ENCODE measurements at regions of chr1 and their contacts with region 1.

Region 1: DNA sequence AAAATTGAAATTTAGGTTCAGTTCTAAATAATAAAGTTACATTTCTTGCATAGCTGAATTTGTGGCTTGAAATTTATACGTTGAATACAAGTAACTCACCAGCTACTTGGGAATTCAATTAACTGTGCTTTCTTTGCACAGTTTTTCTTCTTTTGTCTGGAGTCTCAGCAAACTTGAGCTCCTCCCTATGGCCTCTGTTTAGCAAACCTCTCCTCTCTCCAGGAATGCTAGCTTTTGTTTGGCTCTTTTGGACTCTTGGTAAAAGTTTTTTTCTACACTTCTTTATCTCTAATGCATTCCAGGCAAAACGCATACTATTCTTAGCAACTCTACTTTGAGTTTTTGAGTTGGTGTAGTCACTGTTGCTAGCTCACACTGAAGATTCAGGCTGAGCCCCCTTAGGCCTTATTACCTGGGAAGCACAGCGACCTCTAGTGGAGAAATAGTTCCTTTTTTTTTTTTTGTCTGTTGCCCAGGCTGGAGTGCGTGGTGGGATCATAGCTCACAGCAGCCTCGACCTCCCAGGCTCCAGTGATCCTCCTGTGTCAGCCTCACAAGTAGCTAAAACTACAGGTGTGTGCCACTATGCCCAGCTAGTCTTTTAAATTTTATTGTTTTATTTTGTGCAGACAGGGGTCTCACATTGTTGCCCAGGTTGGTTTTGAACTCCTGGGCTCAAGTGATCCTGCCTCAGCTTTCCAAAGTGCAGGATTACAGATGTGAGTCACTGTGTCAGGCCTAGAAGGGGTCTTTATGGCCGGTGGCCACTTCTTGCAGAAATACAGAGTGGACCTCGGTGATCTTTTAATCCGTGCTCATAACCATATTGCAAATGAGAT is 61.7 kb downstream of the CASQ2 start:
- H3K4me3 ChIP-seq: no peak overlapping the region
- H3K27ac ChIP-seq: no peak overlapping the region
- H3K4me1 ChIP-seq: no peaks in the 10 kb centered on the region
- CTCF ChIP-seq: peak; percentile 48

Region 2: GRCh38 chr1:115609021-115609420 is 97.8 kb before region 1 on chr1:
- CTCF ChIA-PET with region 1: interaction called, 40 read pairs
- POLR2A ChIA-PET with region 1: no interaction called
- H3K4me3 ChIP-seq: no peak overlapping the region
- H3K27ac ChIP-seq: no peak overlapping the region
- H3K4me1 ChIP-seq: no peaks in the 10 kb centered on the region
- CTCF ChIP-seq: no peak

Region 3: GRCh38 chr1:115685029-115685705 is 21.6 kb before region 1 on chr1:
- CTCF ChIA-PET with region 1: interaction called, 13 read pairs
- POLR2A ChIA-PET with region 1: no interaction called
- H3K4me3 ChIP-seq: no peak overlapping the region
- H3K27ac ChIP-seq: no peak overlapping the region
- H3K4me1 ChIP-seq: no peaks in the 10 kb centered on the region
- CTCF ChIP-seq: no peak

Region 4: GRCh38 chr1:115717541-115717940 is 10.7 kb after region 1 on chr1:
- CTCF ChIA-PET with region 1: interaction called, 26 read pairs
- POLR2A ChIA-PET with region 1: no interaction called
- H3K4me3 ChIP-seq: no peak overlapping the region
- H3K27ac ChIP-seq: no peak overlapping the region
- H3K4me1 ChIP-seq: no peaks in the 10 kb centered on the region
- CTCF ChIP-seq: no peak; the same call in 1 of the 2 replicates

Region 5: DNA sequence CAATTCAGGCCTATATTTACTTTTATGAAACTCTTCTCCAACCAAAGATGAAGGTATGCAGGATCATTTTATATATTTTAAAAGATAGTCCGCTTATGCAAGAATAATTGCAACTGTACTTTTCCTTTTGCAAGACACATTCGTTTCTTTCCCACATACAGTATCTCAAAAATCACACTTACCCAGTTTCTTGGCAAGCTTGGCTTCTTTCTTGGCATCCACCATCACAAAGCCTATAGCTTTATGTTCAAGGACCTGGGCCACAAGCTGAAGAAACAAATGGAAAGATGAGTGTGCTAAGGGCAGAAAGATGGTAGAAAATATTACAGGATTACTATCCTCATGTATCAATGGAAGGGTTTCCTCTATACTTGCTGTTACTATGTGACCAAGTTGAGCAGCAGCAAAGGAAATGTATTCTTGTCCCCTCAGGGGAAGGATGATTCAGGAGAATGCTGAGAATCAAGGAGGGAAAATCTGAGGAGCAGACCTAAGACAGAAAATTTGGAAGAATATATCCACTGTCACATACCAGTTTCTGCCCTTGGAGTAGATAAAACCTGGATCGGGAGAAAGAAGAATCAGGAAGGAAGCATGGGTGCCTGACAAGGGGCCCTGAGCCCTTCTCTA is 38.0 kb after region 1 on chr1:
- CTCF ChIA-PET with region 1: interaction called, 14 read pairs
- POLR2A ChIA-PET with region 1: interaction called, 4 read pairs
- H3K4me3 ChIP-seq: no peak overlapping the region
- H3K27ac ChIP-seq: no peak overlapping the region
- H3K4me1 ChIP-seq: no peaks in the 10 kb centered on the region
- CTCF ChIP-seq: no peak

Region 6: GRCh38 chr1:115771847-115772457 is 65.1 kb after region 1 on chr1:
- CTCF ChIA-PET with region 1: interaction called, 35 read pairs
- POLR2A ChIA-PET with region 1: no interaction called
- H3K4me3 ChIP-seq: no peak overlapping the region
- H3K27ac ChIP-seq: no peak overlapping the region
- H3K4me1 ChIP-seq: no peaks in the 10 kb centered on the region
- CTCF ChIP-seq: peak; percentile 79

Region 7: GRCh38 chr1:115911324-115911723 is 204.5 kb after region 1 on chr1:
- CTCF ChIA-PET with region 1: no interaction called
- POLR2A ChIA-PET with region 1: no interaction called
- H3K4me3 ChIP-seq: no peak overlapping the region
- H3K27ac ChIP-seq: no peak overlapping the region
- H3K4me1 ChIP-seq: no peaks in the 10 kb centered on the region
- CTCF ChIP-seq: no peak

Measured in HEK293 (cell line).